ENCODE measurements at regions of chr7 and their contacts with region 1.

Region 1: GRCh38 chr7:69814421-69814962 is 216.2 kb downstream of the AUTS2 start:
- DNase-seq: peak; percentile 11 to 91 (median 82)
- H3K4me3 ChIP-seq: peak overlapping the region in 36 of 59 donors; percentile 2 to 56 (median 26)
- H3K27ac ChIP-seq: peak overlapping the region in 57 of 59 donors; percentile 14 to 94 (median 83)
- H3K27me3 ChIP-seq: no peaks in the 10 kb centered on the region
- CTCF ChIP-seq: peak in 19 of 56 donors; percentile 1 to 41 (median 24)

Region 2: GRCh38 chr7:69591805-69592204 is 222.7 kb before region 1 on chr7:
- intact Hi-C with region 1: loop called in 1 of 2 experiments (anchors 5 kb)
- DNase-seq: no peak
- H3K4me3 ChIP-seq: no peak overlapping the region
- H3K27ac ChIP-seq: peak overlapping the region in 2 of 59 donors; percentile 4 to 29
- H3K27me3 ChIP-seq: no peaks in the 10 kb centered on the region
- CTCF ChIP-seq: no peak

Region 3: DNA sequence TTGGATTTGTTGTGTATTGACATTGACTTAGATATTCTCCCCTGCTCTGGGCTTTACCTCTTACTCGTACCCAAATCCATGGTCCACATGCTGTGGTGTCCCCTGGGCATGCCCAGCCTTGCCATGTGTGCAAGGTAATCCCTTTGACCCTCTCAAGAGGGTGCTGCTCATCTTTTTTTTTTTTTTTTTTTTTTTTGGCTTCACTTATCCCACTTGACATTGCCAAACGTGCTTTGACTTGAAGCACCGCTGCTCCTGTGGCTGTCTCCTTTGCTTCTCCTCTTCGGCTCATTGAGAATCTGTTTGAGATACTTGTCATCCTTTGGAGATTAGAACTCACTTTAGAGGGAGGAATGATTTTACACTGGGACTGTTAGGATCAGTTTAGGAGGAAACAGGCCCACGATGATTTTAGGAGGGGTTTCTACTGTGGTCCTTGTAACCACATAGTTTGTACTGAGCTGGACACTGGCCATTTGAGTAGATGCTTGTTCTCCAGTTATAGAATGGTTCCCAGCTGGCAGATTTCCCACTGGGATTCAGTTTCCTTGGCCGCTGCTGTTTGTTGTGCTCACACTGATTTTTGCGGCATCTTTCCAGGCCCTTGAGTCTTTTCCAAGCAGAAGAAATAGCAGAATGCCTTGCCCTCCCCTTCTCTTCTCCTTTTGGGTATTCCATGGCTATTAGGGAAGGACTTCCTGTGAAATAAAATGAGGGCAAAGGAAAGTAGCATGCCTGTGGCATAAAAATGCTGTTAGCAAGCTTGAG is 31.4 kb before region 1 on chr7:
- intact Hi-C with region 1: loop called in 1 of 2 experiments (anchors 5 kb)
- DNase-seq: peak in 5 of 10 donors; percentile 32 to 61 (median 48)
- H3K4me3 ChIP-seq: peak overlapping the region in 1 of 59 donors; percentile 8
- H3K27ac ChIP-seq: peak overlapping the region in 1 of 59 donors; percentile 38
- H3K27me3 ChIP-seq: no peaks in the 10 kb centered on the region
- CTCF ChIP-seq: no peak

Region 4: DNA sequence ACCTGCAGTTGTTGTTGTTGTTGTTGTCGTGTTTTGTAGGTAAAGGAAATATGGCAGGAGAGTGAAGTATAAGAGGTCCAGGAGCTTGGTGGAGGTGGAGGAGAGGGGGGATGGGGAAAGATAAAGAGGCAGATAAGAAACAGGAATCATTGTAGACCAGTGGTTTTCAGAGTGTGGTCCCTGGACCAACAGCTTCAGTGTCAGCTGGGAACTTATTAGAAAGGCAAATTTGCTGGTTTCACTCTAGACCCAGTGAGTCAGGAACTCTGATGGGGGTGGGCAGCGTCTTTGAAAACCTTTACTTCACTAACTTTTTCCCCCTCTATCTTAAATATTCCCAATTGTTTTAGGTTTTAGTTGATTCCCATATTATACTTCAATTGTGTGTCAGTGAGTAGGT is 25.3 kb after region 1 on chr7:
- intact Hi-C with region 1: no loop called
- DNase-seq: no peak
- H3K4me3 ChIP-seq: peak overlapping the region in 1 of 59 donors; percentile 15
- H3K27ac ChIP-seq: no peak overlapping the region
- H3K27me3 ChIP-seq: no peaks in the 10 kb centered on the region
- CTCF ChIP-seq: no peak

Region 5: GRCh38 chr7:69932034-69932628 is 117.6 kb after region 1 on chr7:
- intact Hi-C with region 1: loop called in 1 of 2 experiments (anchors 10 kb)
- DNase-seq: peak in 7 of 10 donors; percentile 36 to 69 (median 48)
- H3K4me3 ChIP-seq: no peak overlapping the region
- H3K27ac ChIP-seq: no peak overlapping the region
- H3K27me3 ChIP-seq: no peaks in the 10 kb centered on the region
- CTCF ChIP-seq: peak; percentile 31 to 83 (median 71)

Region 6: GRCh38 chr7:71237945-71238344 is 1423.5 kb after region 1 on chr7:
- intact Hi-C with region 1: no loop called
- DNase-seq: peak in 1 of 10 donors; percentile 47
- H3K4me3 ChIP-seq: no peak overlapping the region
- H3K27ac ChIP-seq: peak overlapping the region in 42 of 59 donors; percentile 4 to 90 (median 74)
- H3K27me3 ChIP-seq: no peaks in the 10 kb centered on the region
- CTCF ChIP-seq: no peak

Measured in dorsolateral prefrontal cortex (tissue), 120 donors.